Activated B cell treated with CpG ODN at 0.5 μM for 24 hours (primary cell): ENCODE measurements at regions of chr3 and their contacts with region 1.

Region 1: DNA sequence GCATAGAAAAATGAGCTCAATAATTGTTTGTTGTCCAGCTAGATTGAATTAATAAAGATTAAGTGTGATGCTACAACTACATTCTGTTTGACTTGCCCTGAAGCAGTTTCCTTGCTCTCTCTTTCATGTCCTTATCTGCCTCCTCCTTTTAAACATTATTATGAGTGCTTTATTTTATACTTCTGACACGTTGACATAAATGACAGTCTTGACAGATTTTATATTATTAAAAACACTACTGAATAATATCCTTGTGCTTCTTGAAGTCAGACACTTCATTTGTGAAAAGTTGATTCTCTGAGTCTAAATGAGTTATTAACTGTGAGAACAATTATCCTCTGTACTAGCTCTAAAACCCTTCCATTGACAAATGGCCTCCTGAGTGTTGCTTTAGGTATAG is 58.2 kb downstream of the PLCL2 start:
- DNase-seq: no peak
- ATAC-seq: no peak
- H3K4me3 Mint-ChIP-seq: no peak overlapping the region
- H3K27ac Mint-ChIP-seq: no peak overlapping the region
- H3K4me1 Mint-ChIP-seq: peaks cover 64% of the 10 kb centered on the region
- H3K27me3 Mint-ChIP-seq: no peaks in the 10 kb centered on the region
- CTCF ChIP-seq: no peak

Region 2: DNA sequence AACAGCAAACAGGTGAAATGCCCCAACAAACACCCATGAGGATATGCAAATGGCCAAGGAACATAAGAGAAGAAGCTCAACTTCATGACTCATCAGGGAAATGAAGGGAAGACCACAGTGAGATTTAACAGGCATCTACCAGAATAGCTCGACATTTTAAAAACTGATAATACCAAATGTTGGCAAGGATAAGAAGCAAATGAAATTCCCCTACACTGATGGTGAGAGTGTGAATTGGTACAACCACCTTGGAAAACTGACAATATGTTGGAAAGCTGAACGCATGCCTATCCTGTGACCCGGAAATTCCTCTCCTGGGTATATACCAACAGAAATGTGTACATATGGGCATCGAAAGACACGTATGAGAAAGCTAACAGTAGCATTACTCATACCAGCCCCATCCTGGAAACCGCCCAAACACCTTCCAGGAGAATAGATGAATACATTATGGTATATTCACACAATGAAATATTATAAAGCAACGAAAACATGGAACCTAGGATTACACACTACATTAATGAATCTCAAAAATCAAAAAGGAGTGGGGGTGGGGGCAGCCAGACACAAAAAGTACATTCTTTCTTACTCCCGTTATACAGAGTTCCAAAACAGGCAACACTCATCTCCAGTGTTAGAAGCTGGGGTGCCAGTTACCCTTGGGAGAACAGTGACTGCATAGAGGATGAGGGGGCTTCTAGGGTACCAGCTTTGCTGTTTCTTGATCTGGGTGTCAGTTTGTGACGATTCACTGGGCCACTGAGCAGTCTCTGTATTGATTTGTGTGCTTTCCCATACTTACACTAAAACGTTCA is 446.3 kb before region 1 on chr3:
- CTCF ChIA-PET with region 1: no interaction called
- POLR2A ChIA-PET with region 1: no interaction called
- intact Hi-C with region 1: no loop called
- DNase-seq: no peak
- ATAC-seq: peak; percentile 79
- H3K4me3 Mint-ChIP-seq: peak overlapping the region; percentile 59
- H3K27ac Mint-ChIP-seq: peak overlapping the region; percentile 38
- H3K4me1 Mint-ChIP-seq: peaks cover 66% of the 10 kb centered on the region
- H3K27me3 Mint-ChIP-seq: no peaks in the 10 kb centered on the region
- CTCF ChIP-seq: no peak

Region 3: GRCh38 chr3:16871915-16872842 is 70.8 kb before region 1 on chr3:
- CTCF ChIA-PET with region 1: no interaction called
- POLR2A ChIA-PET with region 1: no interaction called
- intact Hi-C with region 1: no loop called
- DNase-seq: no peak
- ATAC-seq: no peak
- H3K4me3 Mint-ChIP-seq: no peak overlapping the region
- H3K27ac Mint-ChIP-seq: no peak overlapping the region
- H3K4me1 Mint-ChIP-seq: peaks cover 5% of the 10 kb centered on the region
- H3K27me3 Mint-ChIP-seq: peaks cover 7% of the 10 kb centered on the region
- CTCF ChIP-seq: no peak

Region 4: GRCh38 chr3:16928386-16929132 is 14.4 kb before region 1 on chr3:
- CTCF ChIA-PET with region 1: no interaction called
- POLR2A ChIA-PET with region 1: interaction called, 3 read pairs
- intact Hi-C with region 1: loop called (anchors 2 kb)
- DNase-seq: no peak
- ATAC-seq: peak; percentile 10
- H3K4me3 Mint-ChIP-seq: no peak overlapping the region
- H3K27ac Mint-ChIP-seq: peak overlapping the region; percentile 0
- H3K4me1 Mint-ChIP-seq: peaks cover 80% of the 10 kb centered on the region
- H3K27me3 Mint-ChIP-seq: no peaks in the 10 kb centered on the region
- CTCF ChIP-seq: no peak

Region 5: DNA sequence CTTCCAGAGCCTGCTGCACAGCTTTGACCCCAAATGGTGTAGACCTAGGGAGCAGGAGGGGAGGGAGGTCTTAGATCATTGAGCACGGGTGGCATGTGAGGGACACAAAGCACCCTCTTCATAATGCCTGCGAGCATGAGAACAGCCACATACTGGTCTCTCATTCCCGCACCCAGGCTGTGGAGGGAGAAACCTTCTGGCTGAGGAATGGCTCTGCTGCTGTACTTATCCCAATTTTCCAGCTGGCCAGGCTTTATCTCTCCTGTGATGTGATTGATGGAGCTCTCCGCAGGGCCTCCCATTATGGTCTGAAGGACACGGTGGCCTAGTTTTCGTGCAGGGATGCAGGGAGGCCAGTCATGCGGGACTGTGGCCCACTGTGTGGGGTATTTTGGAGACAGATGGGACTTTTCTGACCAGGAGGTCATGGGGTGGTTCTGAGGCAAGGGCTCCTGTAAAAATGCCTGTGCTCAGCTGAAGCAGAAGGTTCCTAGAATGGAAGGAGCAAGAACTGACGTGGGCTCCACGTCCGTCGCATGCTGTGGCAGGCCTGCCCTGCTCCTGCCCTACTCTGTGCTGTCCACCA is 193.3 kb after region 1 on chr3:
- CTCF ChIA-PET with region 1: no interaction called
- POLR2A ChIA-PET with region 1: no interaction called
- intact Hi-C with region 1: no loop called
- DNase-seq: no peak
- ATAC-seq: no peak
- H3K4me3 Mint-ChIP-seq: no peak overlapping the region
- H3K27ac Mint-ChIP-seq: no peak overlapping the region
- H3K4me1 Mint-ChIP-seq: peaks cover 9% of the 10 kb centered on the region
- H3K27me3 Mint-ChIP-seq: peaks cover 5% of the 10 kb centered on the region
- CTCF ChIP-seq: no peak